AG04449 (cell line): ENCODE measurements at regions of chr1 and their contacts with region 1.

Region 1: GRCh38 chr1:50774759-50775351 is 185.2 kb downstream of the FAF1 start:
- DNase-seq: peak; percentile 19
- H3K4me3 ChIP-seq: no peak overlapping the region
- CTCF ChIP-seq: peak; percentile 51

Region 2: DNA sequence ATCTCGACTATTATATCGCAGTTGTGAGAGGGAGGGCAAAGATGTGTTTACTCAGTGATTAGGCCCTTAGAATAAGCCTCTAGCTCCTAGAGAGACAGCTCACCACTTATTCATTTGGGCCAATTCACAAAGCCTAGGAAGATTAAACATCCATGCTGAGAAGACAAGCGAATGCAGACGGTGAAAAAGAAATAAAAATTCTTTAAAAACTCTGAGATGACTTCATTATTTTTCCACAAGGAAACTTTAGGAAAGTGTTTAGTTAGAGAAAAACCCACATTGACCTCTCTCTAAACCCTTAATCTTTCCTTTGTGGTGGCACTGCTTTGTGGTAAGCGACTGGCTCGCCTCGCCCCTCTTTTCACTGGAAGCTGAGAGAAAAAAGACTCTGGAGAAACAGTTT is 204.8 kb before region 1 on chr1:
- CTCF ChIA-PET with region 1: no interaction called
- POLR2A ChIA-PET with region 1: no interaction called
- DNase-seq: no peak
- H3K4me3 ChIP-seq: no peak overlapping the region
- CTCF ChIP-seq: no peak

Region 3: GRCh38 chr1:50796272-50796671 is 21.4 kb after region 1 on chr1:
- CTCF ChIA-PET with region 1: interaction called, 11 read pairs
- POLR2A ChIA-PET with region 1: no interaction called
- DNase-seq: no peak
- H3K4me3 ChIP-seq: no peak overlapping the region
- CTCF ChIP-seq: no peak

Region 4: GRCh38 chr1:51061231-51061938 is 286.5 kb after region 1 on chr1:
- CTCF ChIA-PET with region 1: interaction called, 11 read pairs
- POLR2A ChIA-PET with region 1: no interaction called
- DNase-seq: no peak
- H3K4me3 ChIP-seq: no peak overlapping the region
- CTCF ChIP-seq: no peak